ENCODE measurements at regions of chr17 and their contacts with region 1.

Region 1: GRCh38 chr17:78176548-78177025 is 8.2 kb downstream of the SYNGR2 start:
- DNase-seq: peak; percentile 69 to 88
- ATAC-seq: peak; percentile 81 to 82 (median 82)
- H3K4me3 ChIP-seq: no peak overlapping the region
- H3K4me3 Mint-ChIP-seq: no peak overlapping the region
- H3K27ac ChIP-seq: no peak overlapping the region
- H3K27ac Mint-ChIP-seq: no peak overlapping the region
- H3K4me1 ChIP-seq: peaks cover 62% of the 10 kb centered on the region
- H3K4me1 Mint-ChIP-seq: peaks cover 27 to 40% of the 10 kb centered on the region in 2 donors
- H3K27me3 ChIP-seq: no peaks in the 10 kb centered on the region
- H3K27me3 Mint-ChIP-seq: no peaks in the 10 kb centered on the region
- CTCF ChIP-seq: peak; percentile 93

Region 2: GRCh38 chr17:78082988-78083387 is 93.6 kb before region 1 on chr17:
- intact Hi-C with region 1: loop called (anchors 1 kb)
- DNase-seq: no peak
- ATAC-seq: no peak
- H3K4me3 ChIP-seq: no peak overlapping the region
- H3K4me3 Mint-ChIP-seq: no peak overlapping the region
- H3K27ac ChIP-seq: no peak overlapping the region
- H3K27ac Mint-ChIP-seq: no peak overlapping the region
- H3K4me1 ChIP-seq: no peaks in the 10 kb centered on the region
- H3K4me1 Mint-ChIP-seq: no peaks in the 10 kb centered on the region
- H3K27me3 ChIP-seq: no peaks in the 10 kb centered on the region
- H3K27me3 Mint-ChIP-seq: no peaks in the 10 kb centered on the region
- CTCF ChIP-seq: no peak

Region 3: DNA sequence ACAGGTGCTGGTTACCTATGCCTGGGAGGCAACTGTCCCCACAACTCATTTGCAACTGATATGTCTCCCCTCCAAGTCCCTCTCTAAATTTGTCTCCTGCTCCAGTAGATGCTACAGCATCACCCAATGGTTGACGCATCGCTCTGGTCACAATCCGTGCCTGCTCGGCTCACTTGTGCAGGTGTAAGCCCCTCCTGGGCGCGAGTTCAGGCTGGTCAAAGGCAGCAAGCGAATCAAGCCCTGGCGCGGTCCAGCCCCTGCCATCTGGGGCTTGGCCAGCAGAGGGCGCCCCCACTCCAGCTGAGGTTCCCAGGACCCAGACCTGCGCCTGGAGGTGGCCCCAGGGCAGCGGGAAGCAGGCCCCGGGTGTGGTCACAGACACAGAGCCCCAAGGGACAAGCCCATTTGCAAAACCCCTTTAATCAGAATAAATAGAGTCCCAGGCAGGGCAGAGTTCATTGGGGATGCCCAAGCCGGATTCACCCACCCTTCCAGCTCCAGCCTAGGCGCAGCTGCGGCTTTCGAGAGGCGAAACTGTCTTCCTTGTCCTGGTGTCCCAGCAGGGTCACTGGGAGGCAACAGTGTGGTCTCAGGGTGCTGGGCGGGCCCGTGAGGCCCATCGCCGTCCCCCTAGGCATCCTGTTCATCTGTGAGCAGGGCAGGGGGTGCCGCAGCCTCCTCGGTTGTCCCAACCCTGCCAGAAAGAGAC is 63.9 kb before region 1 on chr17:
- intact Hi-C with region 1: loop called (anchors 1 kb)
- DNase-seq: peak; percentile 83 to 85
- ATAC-seq: peak; percentile 66 to 82 (median 71)
- H3K4me3 ChIP-seq: no peak overlapping the region
- H3K4me3 Mint-ChIP-seq: peak overlapping the region; percentile 72
- H3K27ac ChIP-seq: peak overlapping the region; percentile 73
- H3K27ac Mint-ChIP-seq: peak overlapping the region; percentile 79 to 91
- H3K4me1 ChIP-seq: peaks cover 40% of the 10 kb centered on the region
- H3K4me1 Mint-ChIP-seq: peaks cover 35 to 49% of the 10 kb centered on the region in 2 donors
- H3K27me3 ChIP-seq: no peaks in the 10 kb centered on the region
- H3K27me3 Mint-ChIP-seq: no peaks in the 10 kb centered on the region
- CTCF ChIP-seq: peak; percentile 98

Measured in natural killer cell (primary cell).